Activated CD8-positive, alpha-beta T cell treated with anti-CD3 and anti-CD28 coated beads for 36 hours (primary cell): ENCODE measurements at regions of chr10 and their contacts with region 1.

Region 1: GRCh38 chr10:116787893-116788665 is 45.7 kb upstream of the HSPA12A start:
- DNase-seq: peak; percentile 91
- ATAC-seq: peak; percentile 93
- H3K4me3 Mint-ChIP-seq: peak overlapping the region; percentile 42
- H3K27ac Mint-ChIP-seq: peak overlapping the region; percentile 72
- H3K4me1 Mint-ChIP-seq: peaks cover 12% of the 10 kb centered on the region
- H3K27me3 Mint-ChIP-seq: peaks cover 10% of the 10 kb centered on the region
- CTCF ChIP-seq: peak; percentile 98

Region 2: GRCh38 chr10:116674901-116675423 is 113.1 kb before region 1 on chr10:
- CTCF ChIA-PET with region 1: interaction called, 82 read pairs
- POLR2A ChIA-PET with region 1: no interaction called
- intact Hi-C with region 1: loop called (anchors 2 kb)
- DNase-seq: no peak
- ATAC-seq: no peak
- H3K4me3 Mint-ChIP-seq: no peak overlapping the region
- H3K27ac Mint-ChIP-seq: no peak overlapping the region
- H3K4me1 Mint-ChIP-seq: no peaks in the 10 kb centered on the region
- H3K27me3 Mint-ChIP-seq: peaks cover 9% of the 10 kb centered on the region
- CTCF ChIP-seq: no peak

Region 3: DNA sequence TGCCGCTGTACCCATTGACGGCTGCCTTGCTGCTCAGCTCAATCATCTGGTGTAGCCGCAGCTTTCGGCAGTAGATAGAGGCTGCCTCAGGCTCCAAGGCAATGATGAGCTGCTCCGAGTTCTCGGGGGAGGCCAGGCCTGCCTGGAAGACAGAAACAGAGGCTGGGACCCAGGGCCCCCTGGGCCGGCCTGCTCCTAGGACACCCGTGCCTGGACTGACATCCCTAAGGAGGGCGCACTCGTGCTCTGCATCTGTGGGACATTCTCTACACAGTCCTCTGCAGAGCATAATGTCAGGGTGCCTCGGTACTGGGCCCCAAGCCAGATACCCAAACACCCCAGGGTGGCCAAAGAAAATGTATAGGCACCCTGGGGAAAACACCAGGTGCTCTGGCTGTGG is 104.3 kb before region 1 on chr10:
- CTCF ChIA-PET with region 1: interaction called, 82 read pairs
- POLR2A ChIA-PET with region 1: no interaction called
- intact Hi-C with region 1: loop called (anchors 2 kb)
- DNase-seq: no peak
- ATAC-seq: no peak
- H3K4me3 Mint-ChIP-seq: no peak overlapping the region
- H3K27ac Mint-ChIP-seq: no peak overlapping the region
- H3K4me1 Mint-ChIP-seq: no peaks in the 10 kb centered on the region
- H3K27me3 Mint-ChIP-seq: peaks cover 15% of the 10 kb centered on the region
- CTCF ChIP-seq: no peak

Region 4: DNA sequence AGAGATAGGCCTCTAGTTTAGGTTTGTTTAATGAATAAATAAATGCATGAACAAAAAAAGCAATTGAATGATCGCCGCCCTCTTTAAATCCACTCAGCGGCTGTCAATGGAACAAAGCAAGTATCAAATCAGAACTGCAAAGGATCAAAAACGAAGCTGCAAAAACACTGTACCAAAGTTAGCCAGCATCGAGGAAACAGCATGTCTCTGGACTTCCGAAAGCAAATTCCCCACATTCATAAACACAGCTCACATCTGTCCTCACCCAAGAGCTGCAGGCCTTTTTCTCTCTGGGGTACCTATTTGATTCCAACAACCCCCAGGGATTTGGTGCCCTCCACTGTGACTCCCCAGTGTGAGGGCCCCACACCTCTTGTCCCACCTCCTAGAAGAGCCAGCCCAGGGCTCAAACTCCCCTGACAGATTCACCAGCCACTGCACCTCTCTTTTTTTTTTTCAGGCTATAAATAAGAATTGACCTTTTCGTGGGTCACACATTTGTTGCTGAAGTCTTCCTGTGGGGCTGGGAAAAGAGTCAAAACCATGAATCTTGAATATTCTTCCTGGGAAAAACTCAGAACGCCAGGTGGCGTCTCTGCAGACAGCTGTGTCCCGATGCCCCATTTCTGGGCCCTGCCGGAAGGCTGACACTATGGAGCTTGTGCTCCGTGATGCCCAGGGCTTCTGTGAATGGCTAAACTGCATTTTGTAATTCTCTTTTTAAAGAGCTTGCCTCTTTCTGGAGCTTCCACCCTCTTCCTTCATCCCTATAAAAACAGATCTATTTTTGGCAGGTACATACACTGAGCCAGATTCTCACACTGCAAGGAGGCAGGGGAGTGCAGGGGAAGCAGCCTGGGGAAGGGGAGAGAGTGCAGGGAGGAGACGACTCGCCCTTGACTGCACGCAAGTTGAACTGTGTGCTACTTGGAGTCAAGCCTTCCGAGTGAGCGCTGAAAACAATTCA is 97.4 kb before region 1 on chr10:
- CTCF ChIA-PET with region 1: interaction called, 11 read pairs
- POLR2A ChIA-PET with region 1: no interaction called
- intact Hi-C with region 1: no loop called
- DNase-seq: no peak
- ATAC-seq: no peak
- H3K4me3 Mint-ChIP-seq: no peak overlapping the region
- H3K27ac Mint-ChIP-seq: no peak overlapping the region
- H3K4me1 Mint-ChIP-seq: no peaks in the 10 kb centered on the region
- H3K27me3 Mint-ChIP-seq: peaks cover 25% of the 10 kb centered on the region
- CTCF ChIP-seq: no peak